SK-N-SH (cell line): ENCODE measurements at regions of chr17 and their contacts with region 1.

Region 1: DNA sequence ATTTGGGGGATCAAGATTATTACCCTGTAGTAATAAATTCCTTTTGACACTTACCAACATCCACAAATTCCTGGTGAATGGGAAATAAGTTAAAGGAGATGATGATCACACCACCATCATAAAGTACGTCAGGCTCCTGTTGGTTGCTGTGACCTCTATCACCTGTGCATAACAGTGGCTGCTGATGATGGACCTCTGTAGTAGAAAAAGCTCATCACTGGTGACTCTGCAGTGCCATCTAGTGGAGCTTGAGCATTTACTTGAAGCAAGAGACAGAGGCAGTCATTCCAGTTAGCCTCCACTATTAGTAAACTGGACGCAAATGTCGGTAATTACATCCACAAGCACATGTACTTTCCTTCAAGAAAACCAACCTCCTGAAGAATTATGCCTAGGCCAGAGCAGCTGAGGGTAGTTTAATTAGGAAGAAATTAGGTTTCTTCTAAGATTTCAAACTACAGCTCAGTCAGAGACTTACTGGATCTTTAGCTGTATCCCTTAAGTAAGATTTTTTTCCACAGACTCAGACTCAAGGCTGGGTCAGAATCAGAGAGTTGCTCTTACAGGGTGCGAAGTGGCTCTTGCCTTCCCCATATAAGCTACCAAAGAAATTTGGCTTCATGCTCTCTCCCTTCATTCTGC is 39.3 kb downstream of the CYB561 start:
- DNase-seq: peak; percentile 82
- H3K4me3 ChIP-seq: no peak overlapping the region
- H3K27ac ChIP-seq: peak overlapping the region; percentile 76 to 84
- H3K4me1 ChIP-seq: peaks cover 17 to 21% of the 10 kb centered on the region in 2 experiments
- H3K27me3 ChIP-seq: no peaks in the 10 kb centered on the region
- CTCF ChIP-seq: peak; percentile 99
- EP300 ChIP-seq: no peak; a peak in 1 of 4 replicates
- RAD21 ChIP-seq: peak; percentile 99

Region 2: GRCh38 chr17:62703775-62704378 is 702.9 kb before region 1 on chr17:
- CTCF ChIA-PET with region 1: interaction called, 17 read pairs
- POLR2A ChIA-PET with region 1: no interaction called
- DNase-seq: peak; percentile 96
- H3K4me3 ChIP-seq: peak overlapping the region; percentile 67 to 73
- H3K27ac ChIP-seq: peak overlapping the region; percentile 69 to 85
- H3K4me1 ChIP-seq: peaks cover 15 to 29% of the 10 kb centered on the region in 2 experiments; a peak in 3 of 4 replicates
- H3K27me3 ChIP-seq: no peaks in the 10 kb centered on the region
- CTCF ChIP-seq: peak; percentile 82
- EP300 ChIP-seq: no peak; a peak in 1 of 4 replicates
- RAD21 ChIP-seq: peak; percentile 95

Region 3: GRCh38 chr17:62898220-62898864 is 508.5 kb before region 1 on chr17:
- CTCF ChIA-PET with region 1: no interaction called
- POLR2A ChIA-PET with region 1: no interaction called
- DNase-seq: peak; percentile 67
- H3K4me3 ChIP-seq: no peak overlapping the region; a peak in 1 of 4 replicates
- H3K27ac ChIP-seq: peak overlapping the region; percentile 34 to 56; a peak in 3 of 4 replicates
- H3K4me1 ChIP-seq: peaks cover 11 to 16% of the 10 kb centered on the region in 2 experiments
- H3K27me3 ChIP-seq: no peaks in the 10 kb centered on the region
- CTCF ChIP-seq: no peak
- EP300 ChIP-seq: peak in 1 of 2 experiments; percentile 79; a peak in 2 of 4 replicates
- RAD21 ChIP-seq: 0 out of 2 replicates have a peak, but pooled peaks have one; percentile 12

Region 4: GRCh38 chr17:62995377-62995885 is 411.4 kb before region 1 on chr17:
- CTCF ChIA-PET with region 1: interaction called, 14 read pairs
- POLR2A ChIA-PET with region 1: no interaction called
- DNase-seq: peak; percentile 40
- H3K4me3 ChIP-seq: no peak overlapping the region
- H3K27ac ChIP-seq: no peak overlapping the region
- H3K4me1 ChIP-seq: peaks cover 2 to 5% of the 10 kb centered on the region in 2 experiments; a peak in 2 of 4 replicates
- H3K27me3 ChIP-seq: no peaks in the 10 kb centered on the region
- CTCF ChIP-seq: peak; percentile 64
- EP300 ChIP-seq: no peak
- RAD21 ChIP-seq: peak; percentile 72

Region 5: DNA sequence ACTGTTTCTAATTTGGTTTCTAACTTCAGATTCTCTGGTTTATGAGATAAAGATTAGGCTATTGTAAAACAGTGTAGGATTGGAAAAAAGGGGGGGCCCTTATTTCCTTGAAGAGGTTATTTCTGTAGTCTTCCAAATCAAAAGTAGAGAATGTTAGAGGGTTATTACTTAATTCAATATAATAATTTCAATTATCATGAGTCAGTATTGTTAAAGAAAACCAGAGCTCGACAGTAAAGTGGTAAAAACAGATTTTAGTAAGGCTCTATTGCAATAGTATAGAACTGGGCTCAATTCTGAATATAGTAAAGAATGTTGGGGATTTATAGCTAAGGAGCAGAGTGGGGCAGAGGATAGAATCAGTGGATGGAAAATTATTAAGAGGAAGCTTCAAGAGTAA is 300.8 kb before region 1 on chr17:
- CTCF ChIA-PET with region 1: interaction called, 14 read pairs
- POLR2A ChIA-PET with region 1: no interaction called
- DNase-seq: no peak
- H3K4me3 ChIP-seq: no peak overlapping the region
- H3K27ac ChIP-seq: peak overlapping the region; percentile 11 to 71; a peak in 3 of 4 replicates
- H3K4me1 ChIP-seq: peaks cover 0 to 14% of the 10 kb centered on the region in 2 experiments; a peak in 2 of 4 replicates
- H3K27me3 ChIP-seq: no peaks in the 10 kb centered on the region
- CTCF ChIP-seq: no peak
- EP300 ChIP-seq: peak in 1 of 2 experiments; percentile 52; a peak in 2 of 4 replicates
- RAD21 ChIP-seq: no peak

Region 6: GRCh38 chr17:63275318-63275970 is 131.4 kb before region 1 on chr17:
- CTCF ChIA-PET with region 1: interaction called, 11 read pairs
- POLR2A ChIA-PET with region 1: no interaction called
- DNase-seq: no peak
- H3K4me3 ChIP-seq: no peak overlapping the region
- H3K27ac ChIP-seq: peak overlapping the region; percentile 26 to 97; a peak in 3 of 4 replicates
- H3K4me1 ChIP-seq: peaks cover 0 to 60% of the 10 kb centered on the region in 2 experiments; a peak in 3 of 4 replicates
- H3K27me3 ChIP-seq: no peaks in the 10 kb centered on the region
- CTCF ChIP-seq: no peak
- EP300 ChIP-seq: peak; percentile 71 to 99
- RAD21 ChIP-seq: no peak

Region 7: GRCh38 chr17:63390090-63390489 is 16.7 kb before region 1 on chr17:
- CTCF ChIA-PET with region 1: interaction called, 37 read pairs
- POLR2A ChIA-PET with region 1: no interaction called
- DNase-seq: no peak
- H3K4me3 ChIP-seq: no peak overlapping the region
- H3K27ac ChIP-seq: no peak overlapping the region
- H3K4me1 ChIP-seq: peaks cover 7 to 9% of the 10 kb centered on the region in 2 experiments; a peak in 3 of 4 replicates
- H3K27me3 ChIP-seq: no peaks in the 10 kb centered on the region
- CTCF ChIP-seq: no peak
- EP300 ChIP-seq: no peak
- RAD21 ChIP-seq: no peak

Region 8: DNA sequence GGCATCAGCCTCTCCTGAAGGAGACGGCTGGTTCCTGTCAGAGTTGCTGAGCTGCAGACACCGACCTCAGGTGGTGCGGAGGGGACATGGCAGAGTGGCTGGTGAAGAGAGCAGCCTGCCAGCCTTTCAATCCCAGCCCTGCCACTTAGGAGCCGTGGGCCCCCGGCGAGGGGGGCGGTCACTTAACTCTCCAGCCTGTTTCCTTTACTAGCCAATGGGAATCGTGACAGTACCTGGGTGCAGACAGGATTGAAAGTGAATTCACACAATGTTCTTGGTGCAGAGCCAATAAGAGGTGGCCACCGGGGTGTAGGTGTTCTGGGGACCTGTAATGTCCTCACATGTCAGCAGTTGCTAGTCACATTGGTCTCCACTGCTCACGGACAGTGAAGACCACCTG is 83.5 kb after region 1 on chr17:
- CTCF ChIA-PET with region 1: no interaction called
- POLR2A ChIA-PET with region 1: no interaction called
- DNase-seq: no peak
- H3K4me3 ChIP-seq: no peak overlapping the region
- H3K27ac ChIP-seq: no peak overlapping the region
- H3K4me1 ChIP-seq: peaks cover 0 to 1% of the 10 kb centered on the region in 2 experiments; a peak in 1 of 4 replicates
- H3K27me3 ChIP-seq: no peaks in the 10 kb centered on the region
- CTCF ChIP-seq: no peak
- EP300 ChIP-seq: no peak
- RAD21 ChIP-seq: no peak

Region 9: DNA sequence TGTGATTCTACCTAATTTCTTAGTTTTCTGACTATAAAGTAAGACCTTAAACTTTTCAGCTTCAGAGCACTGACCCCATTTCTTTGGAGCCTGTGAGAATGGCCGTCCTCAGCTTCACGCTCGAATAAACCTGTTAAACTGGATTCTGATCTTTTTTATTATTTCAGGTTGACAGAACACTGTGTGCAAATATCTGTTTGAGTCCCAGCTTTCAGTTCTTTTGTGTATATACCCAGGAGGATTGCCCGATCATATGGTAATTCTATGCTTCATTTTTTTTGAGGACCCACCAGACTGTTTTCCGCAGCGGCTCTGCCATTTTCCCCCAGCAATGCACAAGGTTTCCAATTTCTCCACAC is 96.5 kb after region 1 on chr17:
- CTCF ChIA-PET with region 1: no interaction called
- POLR2A ChIA-PET with region 1: no interaction called
- DNase-seq: no peak
- H3K4me3 ChIP-seq: no peak overlapping the region
- H3K27ac ChIP-seq: no peak overlapping the region
- H3K4me1 ChIP-seq: peaks cover 3 to 4% of the 10 kb centered on the region in 2 experiments; a peak in 1 of 4 replicates
- H3K27me3 ChIP-seq: peaks cover 19% of the 10 kb centered on the region; the same call in 1 of the 2 replicates
- CTCF ChIP-seq: no peak
- EP300 ChIP-seq: no peak
- RAD21 ChIP-seq: no peak

Region 10: GRCh38 chr17:63537991-63538692 is 131.3 kb after region 1 on chr17:
- CTCF ChIA-PET with region 1: no interaction called
- POLR2A ChIA-PET with region 1: no interaction called
- DNase-seq: peak; percentile 76
- H3K4me3 ChIP-seq: no peak overlapping the region; a peak in 1 of 4 replicates
- H3K27ac ChIP-seq: no peak overlapping the region
- H3K4me1 ChIP-seq: peaks cover 0 to 13% of the 10 kb centered on the region in 2 experiments; a peak in 1 of 4 replicates
- H3K27me3 ChIP-seq: peaks cover 17% of the 10 kb centered on the region; the same call in 1 of the 2 replicates
- CTCF ChIP-seq: no peak
- EP300 ChIP-seq: no peak
- RAD21 ChIP-seq: no peak

Region 11: GRCh38 chr17:63611354-63611753 is 204.5 kb after region 1 on chr17:
- CTCF ChIA-PET with region 1: interaction called, 25 read pairs
- POLR2A ChIA-PET with region 1: no interaction called
- DNase-seq: no peak
- H3K4me3 ChIP-seq: no peak overlapping the region
- H3K27ac ChIP-seq: peak overlapping the region; percentile 6 to 11; a peak in 2 of 4 replicates
- H3K4me1 ChIP-seq: no peaks in the 10 kb centered on the region
- H3K27me3 ChIP-seq: no peaks in the 10 kb centered on the region
- CTCF ChIP-seq: no peak
- EP300 ChIP-seq: no peak
- RAD21 ChIP-seq: no peak